Common myeloid progenitor, CD34-positive (primary cell): ENCODE measurements at regions of chr7 and their contacts with region 1.

Region 1: DNA sequence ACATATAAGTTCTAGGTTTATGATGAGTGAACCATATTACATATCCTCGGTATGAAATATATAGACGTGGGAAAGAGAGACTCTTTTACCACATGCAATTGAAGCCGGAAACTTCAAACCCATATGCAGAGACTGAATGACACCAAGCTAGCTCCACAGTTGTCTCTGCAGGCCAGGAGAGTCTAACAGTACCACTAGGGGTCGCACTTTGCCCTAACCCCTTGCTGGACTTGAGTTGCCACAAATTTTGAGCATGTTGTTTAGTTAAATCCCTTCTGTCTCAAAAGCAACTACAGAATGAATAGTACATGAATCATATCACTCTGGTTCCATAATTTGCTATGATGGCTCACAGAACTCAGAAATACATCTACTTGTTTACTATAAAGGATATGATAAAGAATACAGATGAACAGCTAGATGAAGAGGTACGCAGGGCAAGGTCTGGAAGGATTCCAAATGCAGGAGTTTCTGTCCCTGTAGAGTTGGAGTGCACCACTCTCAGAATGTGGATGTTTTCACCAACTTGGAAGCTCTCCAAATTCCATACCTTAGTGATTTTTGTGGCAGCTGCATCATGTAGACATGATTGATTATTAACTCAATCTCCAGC is 112.4 kb upstream of the YAE1 start:
- DNase-seq: peak; percentile 66 to 87 (median 82)
- H3K4me3 ChIP-seq: no peak overlapping the region
- H3K27ac ChIP-seq: no peak overlapping the region
- H3K4me1 ChIP-seq: peaks cover 0 to 3% (median 0%) of the 10 kb centered on the region in 4 experiments
- H3K27me3 ChIP-seq: no peaks in the 10 kb centered on the region

Region 2: GRCh38 chr7:39517240-39517639 is 63.4 kb after region 1 on chr7:
- CTCF ChIA-PET with region 1: interaction called, 12 read pairs
- POLR2A ChIA-PET with region 1: no interaction called
- DNase-seq: no peak
- H3K4me3 ChIP-seq: no peak overlapping the region
- H3K27ac ChIP-seq: no peak overlapping the region
- H3K4me1 ChIP-seq: peaks cover 3 to 27% (median 13%) of the 10 kb centered on the region in 4 experiments
- H3K27me3 ChIP-seq: no peaks in the 10 kb centered on the region